CD14-positive monocyte (primary cell): ENCODE measurements at regions of chr21 and their contacts with region 1.

Region 1: DNA sequence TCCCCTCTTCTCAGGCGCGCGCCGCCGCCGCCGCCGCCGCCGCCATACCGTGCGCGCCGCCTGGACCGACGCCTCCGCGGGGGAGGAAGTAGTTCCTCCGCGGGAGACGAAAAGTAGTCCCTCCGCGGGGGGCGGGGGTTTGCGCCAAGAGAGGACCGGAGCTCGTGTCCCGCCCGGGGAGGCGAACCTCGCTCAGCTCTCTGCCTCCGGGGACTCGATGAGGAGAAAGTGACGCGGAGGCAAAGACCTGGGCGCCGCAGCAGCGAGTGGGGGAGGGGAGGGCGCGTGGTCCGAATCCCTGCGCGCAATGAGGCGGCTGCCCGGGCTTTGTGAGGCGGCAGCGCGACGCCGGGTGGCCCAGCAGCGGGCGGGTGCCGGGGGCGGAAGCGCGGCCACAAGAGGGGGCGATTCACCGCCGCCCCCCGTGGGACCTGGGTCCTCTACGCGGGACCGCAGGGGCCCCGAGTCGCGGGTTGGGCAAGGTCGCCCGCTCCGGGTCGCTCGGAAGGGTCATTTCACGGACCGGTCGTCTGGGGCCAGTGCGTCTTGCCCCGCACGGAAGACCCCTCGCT is at the start of gene BRWD1:
- DNase-seq: peak; percentile 70 to 86 (median 84)
- H3K4me3 ChIP-seq: peak within 1 kb of the TSS; percentile 64 to 82 (median 76)
- H3K4me3 Mint-ChIP-seq: peak within 1 kb of the TSS; percentile 94 to 97
- H3K27ac ChIP-seq: peak within 1 kb of the TSS; percentile 74 to 95
- H3K27ac Mint-ChIP-seq: peak within 1 kb of the TSS; percentile 92 to 98 (median 98)
- H3K4me1 ChIP-seq: peaks cover 26 to 43% of the 10 kb centered on the region in 2 donors
- H3K4me1 Mint-ChIP-seq: peaks cover 35% of the 10 kb centered on the region
- H3K27me3 ChIP-seq: no peaks in the 10 kb centered on the region
- H3K27me3 Mint-ChIP-seq: peaks cover 0 to 2% (median 0%) of the 10 kb centered on the region in 3 donors
- CTCF ChIP-seq: peak; percentile 38
- polyA plus RNA-seq, gene BRWD1: 12.1 to 16.8 (median 12.7) TPM

Region 2: GRCh38 chr21:39349211-39350093 is 35.8 kb after region 1 on chr21:
- intact Hi-C with region 1: loop called (anchors 2 to 5 kb)
- DNase-seq: peak; percentile 90 to 92 (median 92)
- H3K4me3 ChIP-seq: peak overlapping the region; percentile 40 to 89 (median 72)
- H3K4me3 Mint-ChIP-seq: peak overlapping the region; percentile 93 to 97
- H3K27ac ChIP-seq: peak overlapping the region; percentile 88 to 92
- H3K27ac Mint-ChIP-seq: peak overlapping the region; percentile 95 to 98 (median 98)
- H3K4me1 ChIP-seq: peaks cover 22 to 36% of the 10 kb centered on the region in 2 donors
- H3K4me1 Mint-ChIP-seq: peaks cover 33% of the 10 kb centered on the region
- H3K27me3 ChIP-seq: no peaks in the 10 kb centered on the region
- H3K27me3 Mint-ChIP-seq: peaks cover 0 to 3% (median 0%) of the 10 kb centered on the region in 3 donors
- CTCF ChIP-seq: no peak

Region 3: DNA sequence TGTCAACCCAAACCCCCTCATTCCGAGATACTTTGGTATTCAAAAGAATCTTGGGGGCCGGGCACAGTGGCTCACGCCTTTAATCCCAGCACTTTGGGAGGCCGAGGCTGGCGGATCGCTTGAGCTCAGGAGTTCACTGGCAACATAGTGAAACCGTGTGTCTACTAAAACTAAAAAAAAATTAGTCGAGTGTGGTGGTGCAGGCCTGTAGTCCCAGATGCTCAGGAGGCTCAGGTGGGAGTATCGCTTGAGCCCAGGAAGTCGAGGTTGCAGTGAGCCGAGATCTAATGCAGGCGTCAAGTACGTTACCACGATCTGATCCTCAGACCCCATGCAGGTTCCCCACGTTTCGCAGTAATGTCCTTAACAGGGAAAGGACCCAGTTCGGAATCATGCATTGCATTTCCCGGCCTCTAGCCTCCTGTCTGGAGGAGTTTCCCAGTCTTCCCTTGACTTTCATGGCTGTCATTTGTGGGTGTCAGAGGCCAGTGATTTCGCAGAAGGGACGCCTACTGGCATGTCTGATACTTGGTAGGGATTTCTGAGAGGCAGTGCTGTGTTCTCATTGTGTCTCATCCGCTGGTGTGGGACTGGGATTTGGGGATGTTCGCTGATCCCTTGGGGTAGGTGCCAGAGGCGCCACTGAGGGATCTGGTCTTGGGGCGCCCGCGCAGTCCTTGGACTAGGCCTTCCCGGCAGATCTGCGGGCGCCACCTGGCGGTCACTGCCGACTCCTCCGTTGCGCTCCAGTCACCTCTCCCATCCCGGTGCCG is 74.6 kb after region 1 on chr21:
- intact Hi-C with region 1: loop called (anchors 2 to 5 kb)
- DNase-seq: peak; percentile 81 to 89 (median 86)
- H3K4me3 ChIP-seq: peak overlapping the region; percentile 52 to 89 (median 73)
- H3K4me3 Mint-ChIP-seq: peak overlapping the region; percentile 82 to 94
- H3K27ac ChIP-seq: peak overlapping the region; percentile 4 to 64
- H3K27ac Mint-ChIP-seq: peak overlapping the region; percentile 76 to 90 (median 86)
- H3K4me1 ChIP-seq: peaks cover 28% of the 10 kb centered on the region in 2 donors
- H3K4me1 Mint-ChIP-seq: peaks cover 20% of the 10 kb centered on the region
- H3K27me3 ChIP-seq: no peaks in the 10 kb centered on the region
- H3K27me3 Mint-ChIP-seq: peaks cover 0 to 3% (median 0%) of the 10 kb centered on the region in 3 donors
- CTCF ChIP-seq: peak; percentile 92

Region 4: DNA sequence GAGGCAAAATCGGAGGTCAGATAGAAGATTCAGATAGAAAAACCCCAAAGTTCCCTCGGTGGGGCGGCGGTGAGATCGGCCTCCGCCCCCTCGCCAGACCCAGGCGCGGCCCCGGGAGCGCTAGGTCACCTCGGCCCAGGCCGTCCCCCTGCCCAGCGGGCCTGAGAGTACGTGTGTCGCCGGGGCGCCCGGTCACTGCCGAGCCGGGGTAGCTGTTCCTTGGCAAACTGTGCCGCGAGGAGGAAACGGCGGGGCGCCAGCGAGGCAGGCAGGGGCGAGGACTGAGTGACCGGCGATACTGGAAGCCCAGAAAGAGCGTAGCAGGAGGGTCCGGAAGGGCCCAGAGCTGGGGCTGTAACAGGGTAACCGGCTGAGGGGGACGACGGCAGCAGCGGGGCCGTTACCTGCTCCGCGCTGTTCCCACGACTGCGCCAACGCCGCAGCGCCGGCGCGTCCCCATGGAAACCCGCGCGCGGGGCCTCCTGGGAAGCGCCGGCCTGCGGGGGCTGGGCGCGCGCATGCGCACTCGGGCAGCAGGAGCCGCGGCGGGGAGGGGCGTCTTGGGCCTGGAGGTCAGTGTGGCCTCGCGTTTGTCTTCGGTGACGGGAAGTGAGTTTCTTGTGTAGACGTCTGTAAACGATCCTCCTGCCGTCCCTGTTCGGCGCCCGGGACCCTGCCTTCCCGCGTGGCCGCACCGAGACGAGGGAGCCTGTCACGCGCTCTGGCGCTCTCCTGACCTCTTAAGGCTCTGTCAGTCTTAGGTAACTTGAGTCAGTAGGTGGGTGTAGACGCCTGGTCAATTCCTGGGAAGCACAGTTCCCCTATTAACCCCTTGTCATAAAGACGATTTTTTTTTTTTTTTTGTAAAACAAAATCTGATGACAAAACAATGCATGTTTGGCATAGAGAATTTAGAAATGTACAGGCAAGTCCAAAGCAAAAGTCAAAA is 131.9 kb after region 1 on chr21 and contains the start of gene LCA5L:
- intact Hi-C with region 1: loop called (anchors 5 to 10 kb)
- DNase-seq: peak; percentile 90 to 93 (median 92)
- H3K4me3 ChIP-seq: peak within 1 kb of the TSS; percentile 56 to 89 (median 88)
- H3K4me3 Mint-ChIP-seq: peak within 1 kb of the TSS; percentile 87 to 96
- H3K27ac ChIP-seq: peak within 1 kb of the TSS; percentile 89 to 95
- H3K27ac Mint-ChIP-seq: peak within 1 kb of the TSS; percentile 93 to 98 (median 95)
- H3K4me1 ChIP-seq: peaks cover 15 to 18% of the 10 kb centered on the region in 2 donors
- H3K4me1 Mint-ChIP-seq: peaks cover 12% of the 10 kb centered on the region
- H3K27me3 ChIP-seq: peaks cover 0 to 6% of the 10 kb centered on the region in 2 donors
- H3K27me3 Mint-ChIP-seq: peaks cover 9 to 10% (median 9%) of the 10 kb centered on the region in 3 donors
- CTCF ChIP-seq: no peak
- polyA plus RNA-seq, gene LCA5L: 0.12 TPM in 1 of 3 donors, not detected in the others